Natural killer cell (primary cell): ENCODE measurements at regions of chr16 and their contacts with region 1.

Region 1: GRCh38 chr16:2838928-2839327 is 8.8 kb downstream of the ZG16B start:
- DNase-seq: peak; percentile 58 to 81
- ATAC-seq: peak; percentile 37 to 61 (median 46)
- H3K4me3 ChIP-seq: no peak overlapping the region
- H3K4me3 Mint-ChIP-seq: peak overlapping the region; percentile 75
- H3K27ac ChIP-seq: peak overlapping the region; percentile 6
- H3K27ac Mint-ChIP-seq: peak overlapping the region; percentile 30 to 96
- H3K4me1 ChIP-seq: peaks cover 56% of the 10 kb centered on the region
- H3K4me1 Mint-ChIP-seq: peaks cover 58 to 60% of the 10 kb centered on the region in 2 donors
- H3K27me3 ChIP-seq: no peaks in the 10 kb centered on the region
- H3K27me3 Mint-ChIP-seq: no peaks in the 10 kb centered on the region
- CTCF ChIP-seq: peak; percentile 80

Region 2: GRCh38 chr16:1014771-1015495 is 1824.0 kb before region 1 on chr16:
- intact Hi-C with region 1: no loop called
- DNase-seq: no peak
- ATAC-seq: no peak
- H3K4me3 ChIP-seq: no peak overlapping the region
- H3K4me3 Mint-ChIP-seq: no peak overlapping the region
- H3K27ac ChIP-seq: no peak overlapping the region
- H3K27ac Mint-ChIP-seq: no peak overlapping the region
- H3K4me1 ChIP-seq: no peaks in the 10 kb centered on the region
- H3K4me1 Mint-ChIP-seq: no peaks in the 10 kb centered on the region
- H3K27me3 ChIP-seq: no peaks in the 10 kb centered on the region
- H3K27me3 Mint-ChIP-seq: peaks cover 0 to 5% of the 10 kb centered on the region in 2 donors
- CTCF ChIP-seq: no peak

Region 3: GRCh38 chr16:2883027-2883851 is 44.3 kb after region 1 on chr16 and contains the start of gene FLYWCH2:
- intact Hi-C with region 1: loop called (anchors 5 kb)
- DNase-seq: peak; percentile 99 to 100
- ATAC-seq: peak; percentile 81 to 93 (median 82)
- H3K4me3 ChIP-seq: peak within 1 kb of the TSS; percentile 66
- H3K4me3 Mint-ChIP-seq: peak within 1 kb of the TSS; percentile 89
- H3K27ac ChIP-seq: peak within 1 kb of the TSS; percentile 91
- H3K27ac Mint-ChIP-seq: peak within 1 kb of the TSS; percentile 94 to 96
- H3K4me1 ChIP-seq: peaks cover 15% of the 10 kb centered on the region
- H3K4me1 Mint-ChIP-seq: peaks cover 7 to 18% of the 10 kb centered on the region in 2 donors
- H3K27me3 ChIP-seq: no peaks in the 10 kb centered on the region
- H3K27me3 Mint-ChIP-seq: no peaks in the 10 kb centered on the region
- CTCF ChIP-seq: no peak
- total RNA-seq, gene FLYWCH2: 12.0 to 12.7 (median 12.6) TPM

Region 4: DNA sequence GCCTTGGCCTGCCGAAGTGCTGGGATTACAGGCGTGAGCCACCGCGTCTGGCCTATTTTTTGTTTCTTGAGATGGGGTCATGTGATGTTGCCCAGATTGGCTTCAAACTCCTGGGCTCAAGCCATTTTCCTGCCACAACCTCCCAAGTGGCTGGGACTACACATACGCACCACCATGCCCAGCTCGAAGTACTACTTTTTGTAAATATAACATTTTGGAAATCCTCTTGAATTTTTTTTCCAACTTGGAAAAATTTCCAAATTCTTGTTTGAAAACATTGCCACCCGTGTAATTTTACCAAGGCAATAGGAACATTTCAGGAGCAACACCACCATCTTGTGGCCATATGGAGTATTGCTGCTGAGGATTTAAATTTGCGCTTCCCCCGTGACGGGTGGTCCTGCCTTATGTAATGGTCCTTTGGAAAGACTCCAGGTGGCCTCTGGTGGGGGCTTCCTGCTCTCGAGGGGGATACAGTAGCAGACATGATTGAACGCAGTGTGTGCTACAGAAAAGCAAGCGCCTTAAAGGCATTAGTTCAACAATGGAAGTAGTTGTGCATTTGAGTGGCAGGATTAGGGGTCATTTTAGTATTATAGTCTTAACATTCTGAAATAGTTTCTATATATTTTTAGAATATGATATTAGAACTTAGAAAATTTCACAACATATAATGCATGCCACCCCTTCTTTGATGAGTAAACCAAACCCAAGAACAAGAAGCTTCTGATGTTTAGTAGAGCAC is 80.8 kb after region 1 on chr16:
- intact Hi-C with region 1: loop called (anchors 1 kb)
- DNase-seq: peak; percentile 51 to 88
- ATAC-seq: peak; percentile 76 to 97 (median 78)
- H3K4me3 ChIP-seq: no peak overlapping the region
- H3K4me3 Mint-ChIP-seq: no peak overlapping the region
- H3K27ac ChIP-seq: no peak overlapping the region
- H3K27ac Mint-ChIP-seq: peak overlapping the region; percentile 58 to 83
- H3K4me1 ChIP-seq: peaks cover 3% of the 10 kb centered on the region
- H3K4me1 Mint-ChIP-seq: peaks cover 5 to 7% of the 10 kb centered on the region in 2 donors
- H3K27me3 ChIP-seq: no peaks in the 10 kb centered on the region
- H3K27me3 Mint-ChIP-seq: no peaks in the 10 kb centered on the region
- CTCF ChIP-seq: peak; percentile 89